ENCODE measurements at regions of chr10 and their contacts with region 1.

Region 1: DNA sequence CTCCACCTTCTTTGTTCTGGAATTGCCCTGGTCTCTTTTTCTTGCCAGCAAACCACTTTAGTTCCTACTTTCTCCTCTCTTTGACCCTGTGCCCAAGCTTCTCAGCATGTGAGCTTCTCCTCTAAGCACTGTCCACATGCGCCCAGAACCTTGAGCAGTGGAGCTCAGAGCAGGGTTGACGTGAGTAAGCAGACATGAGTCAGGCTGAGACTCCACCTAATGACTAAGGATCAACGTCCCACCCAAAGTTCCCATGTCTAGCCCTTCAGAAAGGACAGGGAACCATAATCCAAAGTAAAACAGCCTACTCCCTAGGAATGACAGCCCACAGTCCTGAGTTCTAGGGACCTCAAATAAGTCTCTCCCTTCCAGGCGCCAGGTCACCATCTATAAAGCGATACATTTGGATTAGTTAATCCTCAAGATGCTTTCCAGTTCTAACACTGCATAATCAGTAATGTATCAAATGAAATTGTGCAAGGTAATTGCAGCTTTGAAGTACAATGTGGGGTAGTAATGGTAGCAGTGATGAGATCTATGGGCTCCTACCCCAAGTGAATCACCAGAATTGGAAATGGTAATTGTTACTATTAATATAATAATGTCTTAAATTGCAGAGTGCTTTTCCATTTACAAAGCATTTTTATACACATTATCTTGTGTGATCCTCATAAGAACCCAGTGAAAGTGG is 44.5 kb downstream of the KCNMA1 start:
- DNase-seq: peak; percentile 63
- ATAC-seq: peak; percentile 91
- H3K4me3 ChIP-seq: peak overlapping the region in 1 of 2 experiments; percentile 37; a peak in 1 of 4 replicates
- H3K27ac ChIP-seq: no peak overlapping the region
- H3K4me1 ChIP-seq: peaks cover 0 to 21% of the 10 kb centered on the region in 2 experiments; a peak in 2 of 4 replicates
- H3K27me3 ChIP-seq: no peaks in the 10 kb centered on the region
- CTCF ChIP-seq: no peak
- POLR2A ChIP-seq: no peak
- RAD21 ChIP-seq: peak; percentile 24; the same call in 1 of the 2 replicates

Region 2: DNA sequence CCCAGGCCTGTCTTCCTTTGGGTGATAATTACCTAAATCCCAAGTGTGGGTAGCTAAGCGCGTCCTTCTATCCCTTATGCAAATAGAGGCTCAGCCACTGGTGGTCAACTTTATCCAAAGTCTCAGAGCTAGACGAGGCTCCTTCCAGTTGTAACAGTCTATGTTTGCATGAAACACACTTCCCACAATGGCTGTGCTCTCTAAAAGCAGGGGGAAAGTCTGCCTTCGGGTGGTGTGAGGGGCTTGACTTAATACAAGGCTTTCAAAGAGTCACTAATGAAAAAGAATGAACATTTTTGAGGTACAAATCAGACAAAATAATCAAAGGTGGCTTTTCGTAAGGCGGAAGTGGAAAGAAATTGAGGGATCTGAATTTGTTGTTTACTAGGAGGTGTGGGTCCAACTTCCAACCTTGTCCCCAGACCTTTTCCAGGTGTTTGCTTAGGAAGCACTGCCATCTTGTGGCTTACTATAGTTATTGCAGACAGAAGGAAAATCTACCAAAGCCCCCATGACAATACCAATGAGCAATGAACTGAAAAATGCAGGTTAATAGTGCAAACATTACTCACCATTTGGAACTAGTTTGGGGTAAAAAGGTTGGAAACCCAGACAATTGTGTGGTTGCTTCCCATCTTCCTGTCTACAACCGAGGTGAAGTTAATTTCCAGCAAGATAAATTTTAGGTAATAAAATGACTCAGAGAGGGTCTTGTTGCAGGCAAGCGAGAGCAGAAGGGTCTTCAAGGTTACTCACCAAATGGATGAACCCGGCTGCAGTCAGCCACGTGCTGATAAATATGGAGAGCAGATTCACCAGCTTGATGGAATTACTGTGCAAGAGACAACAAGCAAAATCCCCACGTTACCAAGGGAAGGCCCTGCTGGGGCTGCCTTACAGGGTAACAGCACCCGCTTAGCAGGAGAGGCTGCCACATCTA is 481.2 kb before region 1 on chr10:
- CTCF ChIA-PET with region 1: no interaction called
- POLR2A ChIA-PET with region 1: no interaction called
- RAD21 ChIA-PET with region 1: no interaction called
- intact Hi-C with region 1: no loop called
- DNase-seq: peak; percentile 16
- ATAC-seq: peak; percentile 86
- H3K4me3 ChIP-seq: no peak overlapping the region
- H3K27ac ChIP-seq: no peak overlapping the region
- H3K4me1 ChIP-seq: no peaks in the 10 kb centered on the region
- H3K27me3 ChIP-seq: peaks cover 12% of the 10 kb centered on the region
- CTCF ChIP-seq: peak; percentile 46 to 83 (median 72); a peak in 5 of 6 replicates
- POLR2A ChIP-seq: no peak
- RAD21 ChIP-seq: peak; percentile 83

Region 3: DNA sequence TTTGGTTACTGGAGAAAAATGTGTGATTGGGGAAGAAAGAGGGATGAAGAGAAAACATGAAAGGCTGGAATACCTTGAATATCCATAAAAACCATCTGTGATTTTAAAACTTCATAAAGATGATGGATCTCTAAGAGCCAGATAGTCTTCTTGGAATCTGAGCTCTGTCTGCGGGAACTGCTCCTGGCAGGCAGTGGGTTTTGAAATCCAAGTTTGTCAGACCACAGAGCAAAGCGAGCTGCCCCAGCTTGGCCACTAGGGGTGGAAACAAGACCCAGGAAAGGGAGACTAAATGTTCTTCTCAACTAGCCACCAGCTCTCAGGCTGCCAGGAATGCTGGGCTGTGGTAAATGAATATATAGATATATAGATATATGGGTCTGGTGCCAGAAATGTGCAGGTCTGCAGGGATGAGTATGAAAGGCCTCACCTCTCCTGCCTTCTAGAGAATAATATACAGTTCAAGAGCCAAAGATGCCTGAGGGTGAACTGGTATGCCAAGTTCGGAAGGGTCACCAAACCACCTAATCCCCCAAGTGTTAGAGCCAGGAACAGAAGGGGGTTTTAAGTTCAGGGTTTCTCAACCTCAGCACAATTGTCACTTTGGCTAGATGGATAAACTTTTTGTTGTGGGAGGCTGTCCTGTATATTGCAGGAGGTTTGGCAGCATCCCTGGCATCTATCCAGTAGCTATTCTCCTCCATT is 164.2 kb before region 1 on chr10:
- CTCF ChIA-PET with region 1: no interaction called
- POLR2A ChIA-PET with region 1: no interaction called
- RAD21 ChIA-PET with region 1: no interaction called
- intact Hi-C with region 1: loop called (anchors 5 kb)
- DNase-seq: peak; percentile 24
- ATAC-seq: peak; percentile 92
- H3K4me3 ChIP-seq: no peak overlapping the region
- H3K27ac ChIP-seq: no peak overlapping the region
- H3K4me1 ChIP-seq: no peaks in the 10 kb centered on the region
- H3K27me3 ChIP-seq: no peaks in the 10 kb centered on the region; the same call in 1 of the 2 replicates
- CTCF ChIP-seq: peak; percentile 43 to 78 (median 66); a peak in 5 of 6 replicates
- POLR2A ChIP-seq: no peak
- RAD21 ChIP-seq: peak; percentile 58

Region 4: DNA sequence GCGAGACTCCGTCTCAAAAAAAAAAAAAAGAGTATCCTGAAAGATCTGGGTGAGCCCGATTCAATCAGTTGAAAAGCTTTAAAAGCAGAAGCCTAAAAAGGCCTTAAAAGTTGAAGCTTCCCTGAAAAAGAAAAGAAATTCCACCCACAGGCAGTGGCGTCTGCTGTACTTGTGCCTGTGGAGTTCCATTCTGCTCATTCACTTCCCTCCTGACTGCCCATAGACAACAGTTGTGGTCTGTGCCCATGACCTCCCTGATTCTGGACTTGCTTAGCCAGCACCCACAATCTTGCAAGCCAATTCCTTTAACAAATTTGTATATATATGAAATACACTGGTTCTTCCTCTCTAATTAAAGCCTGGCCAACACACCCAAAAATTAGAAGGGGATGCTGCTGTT is 191.8 kb after region 1 on chr10:
- CTCF ChIA-PET with region 1: no interaction called
- POLR2A ChIA-PET with region 1: no interaction called
- RAD21 ChIA-PET with region 1: no interaction called
- intact Hi-C with region 1: no loop called
- DNase-seq: no peak
- ATAC-seq: no peak
- H3K4me3 ChIP-seq: no peak overlapping the region
- H3K27ac ChIP-seq: no peak overlapping the region
- H3K4me1 ChIP-seq: no peaks in the 10 kb centered on the region
- H3K27me3 ChIP-seq: no peaks in the 10 kb centered on the region
- CTCF ChIP-seq: no peak
- POLR2A ChIP-seq: no peak
- RAD21 ChIP-seq: no peak

Measured in HCT116 (cell line).